Dorsolateral prefrontal cortex (tissue), 120 donors: ENCODE measurements at regions of chr13 and their contacts with region 1.

Region 1: GRCh38 chr13:32310134-32310706 is 4.9 kb downstream of the ZAR1L start:
- DNase-seq: peak in 1 of 10 donors; percentile 15
- H3K4me3 ChIP-seq: peak overlapping the region in 26 of 59 donors; percentile 1 to 41 (median 14)
- H3K27ac ChIP-seq: no peak overlapping the region
- H3K27me3 ChIP-seq: peaks cover 0 to 4% (median 0%) of the 10 kb centered on the region in 45 donors
- CTCF ChIP-seq: peak; percentile 47 to 85 (median 77)

Region 2: DNA sequence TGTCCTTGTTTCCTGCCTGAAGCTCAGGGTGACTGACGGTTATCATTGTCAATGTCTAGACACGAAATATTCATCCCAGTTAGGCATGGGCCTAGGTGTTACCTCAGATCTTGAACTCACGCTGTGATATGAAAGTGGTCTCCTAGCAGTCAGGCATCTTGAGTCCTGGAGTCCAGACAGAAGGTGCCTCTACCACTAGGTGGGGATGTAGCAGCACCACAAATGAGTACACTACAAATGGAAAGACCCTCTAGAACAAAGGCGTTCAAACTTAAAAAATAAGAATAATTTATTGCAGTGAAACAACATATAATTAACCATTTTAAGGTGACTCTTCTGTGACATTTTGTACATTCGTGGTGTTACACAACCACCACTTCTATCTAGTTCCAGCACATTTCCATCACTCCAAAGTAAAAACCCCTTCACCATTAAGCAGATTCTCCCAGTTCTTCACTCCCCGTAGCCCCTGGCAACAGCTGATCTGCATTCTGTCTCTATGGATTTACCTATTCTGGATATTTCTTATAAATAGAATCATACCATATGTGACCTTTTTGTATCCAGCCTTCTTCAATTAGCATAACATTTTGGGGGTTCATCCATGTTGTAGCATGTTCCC is 290.5 kb before region 1 on chr13:
- intact Hi-C with region 1: loop called in 1 of 2 experiments (anchors 1 kb)
- DNase-seq: peak in 4 of 10 donors; percentile 19 to 63 (median 41)
- H3K4me3 ChIP-seq: no peak overlapping the region
- H3K27ac ChIP-seq: no peak overlapping the region
- H3K27me3 ChIP-seq: no peaks in the 10 kb centered on the region
- CTCF ChIP-seq: peak; percentile 23 to 87 (median 72)